ENCODE measurements at regions of chr3 and their contacts with region 1.

Region 1: GRCh38 chr3:70550723-70551319 is 238.4 kb upstream of the MDFIC2 start:
- DNase-seq: peak; percentile 59 to 83 (median 65)
- ATAC-seq: peak; percentile 84
- H3K4me3 ChIP-seq: no peak overlapping the region
- H3K4me3 Mint-ChIP-seq: no peak overlapping the region
- H3K27ac ChIP-seq: no peak overlapping the region
- H3K27ac Mint-ChIP-seq: no peak overlapping the region
- H3K4me1 ChIP-seq: no peaks in the 10 kb centered on the region
- H3K4me1 Mint-ChIP-seq: no peaks in the 10 kb centered on the region
- H3K27me3 ChIP-seq: no peaks in the 10 kb centered on the region
- H3K27me3 Mint-ChIP-seq: peaks cover 12% of the 10 kb centered on the region
- CTCF ChIP-seq: peak; percentile 75

Region 2: GRCh38 chr3:71652781-71653413 is 1102.1 kb after region 1 on chr3:
- CTCF ChIA-PET with region 1: no interaction called
- POLR2A ChIA-PET with region 1: no interaction called
- intact Hi-C with region 1: loop called (anchors 2 kb)
- DNase-seq: peak in 4 of 14 experiments; percentile 20 to 57 (median 38)
- ATAC-seq: no peak
- H3K4me3 ChIP-seq: no peak overlapping the region
- H3K4me3 Mint-ChIP-seq: no peak overlapping the region
- H3K27ac ChIP-seq: no peak overlapping the region
- H3K27ac Mint-ChIP-seq: no peak overlapping the region
- H3K4me1 ChIP-seq: no peaks in the 10 kb centered on the region
- H3K4me1 Mint-ChIP-seq: peaks cover 6% of the 10 kb centered on the region
- H3K27me3 ChIP-seq: no peaks in the 10 kb centered on the region
- H3K27me3 Mint-ChIP-seq: no peaks in the 10 kb centered on the region
- CTCF ChIP-seq: peak; percentile 36

Region 3: DNA sequence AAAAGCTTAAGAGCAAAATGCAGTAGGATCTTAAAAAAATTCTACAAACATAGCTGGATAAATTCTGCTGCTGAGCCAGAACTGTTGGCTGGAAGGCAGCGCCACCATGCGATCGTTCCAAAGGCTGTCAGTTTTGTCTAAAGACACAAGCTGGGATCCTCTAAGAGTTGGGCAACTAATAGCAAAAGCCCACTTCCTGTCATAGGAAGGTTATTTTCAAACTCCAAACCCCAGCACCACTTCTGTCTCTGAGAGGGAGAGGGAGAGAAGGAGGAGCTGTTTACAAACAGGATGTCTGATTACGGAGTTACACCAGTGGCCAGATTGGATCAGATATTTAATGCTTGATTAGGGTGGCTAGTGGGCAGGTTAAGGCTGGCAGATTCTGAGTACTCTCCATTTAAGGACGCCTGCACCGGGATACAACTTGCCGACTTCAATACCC is 1130.4 kb after region 1 on chr3:
- CTCF ChIA-PET with region 1: no interaction called
- POLR2A ChIA-PET with region 1: no interaction called
- intact Hi-C with region 1: loop called in 1 of 2 experiments (anchors 10 kb)
- DNase-seq: peak in 8 of 14 experiments; percentile 10 to 54 (median 28)
- ATAC-seq: peak; percentile 55
- H3K4me3 ChIP-seq: no peak overlapping the region
- H3K4me3 Mint-ChIP-seq: no peak overlapping the region
- H3K27ac ChIP-seq: no peak overlapping the region
- H3K27ac Mint-ChIP-seq: peak overlapping the region; percentile 54
- H3K4me1 ChIP-seq: no peaks in the 10 kb centered on the region
- H3K4me1 Mint-ChIP-seq: peaks cover 14% of the 10 kb centered on the region
- H3K27me3 ChIP-seq: no peaks in the 10 kb centered on the region
- H3K27me3 Mint-ChIP-seq: no peaks in the 10 kb centered on the region
- CTCF ChIP-seq: peak; percentile 43